ENCODE measurements at regions of chr19 and their contacts with region 1.

Region 1: GRCh38 chr19:52962394-52963246 is at the start of gene ZNF816:
- DNase-seq: peak; percentile 98
- H3K4me3 Mint-ChIP-seq: peak within 1 kb of the TSS; percentile 97
- H3K27ac Mint-ChIP-seq: peak within 1 kb of the TSS; percentile 92
- H3K4me1 Mint-ChIP-seq: peaks cover 14% of the 10 kb centered on the region
- H3K27me3 Mint-ChIP-seq: no peaks in the 10 kb centered on the region
- total RNA-seq, gene ZNF816: 8.1 and 8.4 TPM in 2 replicates

Region 2: GRCh38 chr19:52527134-52527955 is 435.3 kb before region 1 on chr19 and contains the start of gene ZNF808:
- intact Hi-C with region 1: loop called (anchors 1 kb)
- DNase-seq: peak; percentile 87
- H3K4me3 Mint-ChIP-seq: peak within 1 kb of the TSS; percentile 96
- H3K27ac Mint-ChIP-seq: peak within 1 kb of the TSS; percentile 97
- H3K4me1 Mint-ChIP-seq: peaks cover 12% of the 10 kb centered on the region
- H3K27me3 Mint-ChIP-seq: no peaks in the 10 kb centered on the region
- total RNA-seq, gene ZNF808: 20.7 and 22.6 TPM in 2 replicates

Region 3: GRCh38 chr19:52734893-52735661 is 227.5 kb before region 1 on chr19 and contains the start of gene ZNF611:
- intact Hi-C with region 1: loop called (anchors 10 kb)
- DNase-seq: peak; percentile 97
- H3K4me3 Mint-ChIP-seq: peak within 1 kb of the TSS; percentile 89
- H3K27ac Mint-ChIP-seq: peak within 1 kb of the TSS; percentile 81
- H3K4me1 Mint-ChIP-seq: peaks cover 19% of the 10 kb centered on the region
- H3K27me3 Mint-ChIP-seq: no peaks in the 10 kb centered on the region
- total RNA-seq, gene ZNF611: 15.6 and 17.3 TPM in 2 replicates

Region 4: DNA sequence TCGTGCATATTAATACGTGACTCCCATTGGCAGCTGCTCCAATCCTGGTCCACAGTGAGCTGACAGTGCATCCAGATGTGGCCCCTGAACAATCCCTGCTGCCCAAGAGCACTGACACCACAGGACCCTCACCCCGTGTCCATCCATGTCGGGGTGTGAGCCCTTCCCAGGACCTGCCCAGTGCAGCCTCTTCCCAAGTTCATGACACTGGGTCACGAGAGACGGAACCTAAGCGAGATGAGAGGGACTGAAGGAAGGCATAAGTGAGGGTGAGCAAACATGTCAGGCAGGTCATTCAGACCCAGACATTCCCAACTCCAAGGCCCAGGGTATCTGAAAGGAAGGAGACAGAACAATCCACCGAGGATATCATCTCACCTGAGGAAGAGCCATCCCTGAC is 108.7 kb before region 1 on chr19:
- intact Hi-C with region 1: loop called (anchors 10 kb)
- DNase-seq: no peak
- H3K4me3 Mint-ChIP-seq: no peak overlapping the region
- H3K27ac Mint-ChIP-seq: no peak overlapping the region
- H3K4me1 Mint-ChIP-seq: peaks cover 9% of the 10 kb centered on the region
- H3K27me3 Mint-ChIP-seq: no peaks in the 10 kb centered on the region

Region 5: DNA sequence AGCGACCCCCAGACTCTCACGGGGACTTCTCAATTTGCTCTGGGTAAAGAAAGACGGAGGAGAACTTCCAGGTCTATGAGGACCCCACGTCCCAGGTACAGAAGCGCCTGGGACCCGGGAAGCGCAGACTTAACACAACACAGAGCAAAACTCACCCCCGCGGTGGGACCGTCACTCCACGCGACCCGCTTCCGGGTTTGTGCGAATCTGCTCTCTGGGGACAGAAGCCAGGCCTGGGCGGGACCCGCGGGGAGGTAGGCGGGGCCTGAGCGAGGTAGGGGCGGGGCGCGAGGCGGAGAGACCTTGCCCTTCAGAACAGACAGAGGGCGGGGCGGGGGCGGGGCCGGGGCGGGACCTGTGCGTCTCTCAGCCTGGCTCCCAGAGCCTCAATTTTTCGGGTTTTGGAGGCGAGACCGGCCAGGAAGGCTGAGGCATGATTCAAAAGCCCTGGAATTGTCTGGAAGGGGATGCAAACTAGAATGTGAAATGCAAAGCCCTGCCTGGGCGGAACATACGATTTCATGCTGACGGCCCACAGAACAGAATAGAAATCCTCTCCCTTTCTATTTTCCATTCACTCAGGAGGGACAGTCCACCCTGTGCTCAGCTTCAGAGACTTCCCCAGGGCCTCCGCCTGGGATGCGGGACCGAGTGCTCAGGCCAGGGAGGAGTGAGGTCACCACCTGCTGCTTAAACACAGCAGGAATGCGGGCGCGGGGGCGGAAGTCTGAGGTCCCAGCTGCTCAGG is 20.1 kb before region 1 on chr19:
- intact Hi-C with region 1: loop called (anchors 1 kb)
- DNase-seq: peak; percentile 95
- H3K4me3 Mint-ChIP-seq: peak overlapping the region; percentile 90
- H3K27ac Mint-ChIP-seq: peak overlapping the region; percentile 89
- H3K4me1 Mint-ChIP-seq: peaks cover 21% of the 10 kb centered on the region
- H3K27me3 Mint-ChIP-seq: no peaks in the 10 kb centered on the region

Measured in activated T-helper 2 cell treated with anti-CD3 and anti-CD28 coated beads, Interferon-gamma antibody, Interleukin-2, Interleukin-4, amounts not matched to agents 10 μg/mL and 5 μg/mL and 100 μg/mL, durations not matched to agents 14 hours and 24 hours and 36 hours (primary cell).